BJ (cell line): ENCODE measurements at regions of chr3 and their contacts with region 1.

Region 1: GRCh38 chr3:48439820-48440589 is at the starts of genes CCDC51 and TMA7:
- DNase-seq: peak; percentile 77
- H3K4me3 ChIP-seq: peak within 1 kb of the TSS; percentile 68
- H3K27me3 ChIP-seq: no peaks in the 10 kb centered on the region
- CTCF ChIP-seq: no peak
- polyA plus RNA-seq, gene CCDC51: 11.6 and 14.3 TPM in 2 replicates
- polyA plus RNA-seq, gene TMA7: 53.8 and 162 TPM in 2 replicates

Region 2: DNA sequence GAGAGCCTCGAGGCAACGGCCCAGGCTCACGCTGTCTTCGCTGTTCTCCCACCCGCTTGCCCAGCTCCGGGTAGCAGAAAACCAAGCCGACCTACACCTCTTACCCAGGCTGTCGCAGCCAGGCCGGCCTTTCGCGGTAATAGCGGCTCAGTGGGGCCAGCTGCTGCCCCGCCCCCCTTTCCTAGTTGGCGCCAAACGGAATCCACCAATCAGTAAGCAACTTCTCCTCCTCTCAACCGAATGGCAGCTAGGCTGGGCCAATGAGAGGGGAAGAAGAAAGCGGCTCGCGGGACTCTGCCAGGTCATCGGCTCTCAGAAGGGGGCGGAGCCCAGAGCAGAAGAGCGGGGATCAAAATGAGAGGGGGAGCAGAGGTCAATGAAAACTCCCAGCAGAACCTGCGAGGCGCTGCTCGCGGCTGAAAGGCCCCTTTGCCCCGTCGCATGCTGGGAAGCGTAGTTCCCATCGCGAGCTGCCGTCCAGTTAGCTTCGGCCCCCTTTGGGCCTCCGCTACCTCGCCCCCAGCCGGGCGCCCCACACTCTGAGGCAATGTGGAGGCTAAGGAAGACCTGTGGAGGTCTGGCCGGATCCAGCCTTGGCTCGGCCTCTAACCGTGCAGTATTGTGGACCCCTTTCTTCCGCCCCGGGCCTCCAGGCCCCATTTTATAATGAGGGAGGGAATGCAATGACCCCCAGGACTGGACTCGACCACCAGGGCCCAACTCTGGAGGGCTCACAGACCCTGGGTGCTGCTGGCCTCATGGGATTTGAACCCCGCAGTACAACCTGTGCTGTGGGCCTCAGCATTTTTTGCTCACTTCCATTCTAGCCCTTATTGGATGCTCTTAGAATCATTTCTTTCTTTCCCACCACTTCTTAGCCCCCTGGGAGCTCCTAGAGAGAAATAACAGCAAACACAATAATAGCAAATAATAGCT is 251.5 kb before region 1 on chr3 and contains the start of gene CDC25A:
- CTCF ChIA-PET with region 1: interaction called, 29 read pairs
- POLR2A ChIA-PET with region 1: no interaction called
- DNase-seq: peak; percentile 95
- H3K4me3 ChIP-seq: peak within 1 kb of the TSS; percentile 58
- H3K27me3 ChIP-seq: no peaks in the 10 kb centered on the region
- CTCF ChIP-seq: no peak
- polyA plus RNA-seq, gene CDC25A: 1.9 and 2.7 TPM in 2 replicates

Region 3: DNA sequence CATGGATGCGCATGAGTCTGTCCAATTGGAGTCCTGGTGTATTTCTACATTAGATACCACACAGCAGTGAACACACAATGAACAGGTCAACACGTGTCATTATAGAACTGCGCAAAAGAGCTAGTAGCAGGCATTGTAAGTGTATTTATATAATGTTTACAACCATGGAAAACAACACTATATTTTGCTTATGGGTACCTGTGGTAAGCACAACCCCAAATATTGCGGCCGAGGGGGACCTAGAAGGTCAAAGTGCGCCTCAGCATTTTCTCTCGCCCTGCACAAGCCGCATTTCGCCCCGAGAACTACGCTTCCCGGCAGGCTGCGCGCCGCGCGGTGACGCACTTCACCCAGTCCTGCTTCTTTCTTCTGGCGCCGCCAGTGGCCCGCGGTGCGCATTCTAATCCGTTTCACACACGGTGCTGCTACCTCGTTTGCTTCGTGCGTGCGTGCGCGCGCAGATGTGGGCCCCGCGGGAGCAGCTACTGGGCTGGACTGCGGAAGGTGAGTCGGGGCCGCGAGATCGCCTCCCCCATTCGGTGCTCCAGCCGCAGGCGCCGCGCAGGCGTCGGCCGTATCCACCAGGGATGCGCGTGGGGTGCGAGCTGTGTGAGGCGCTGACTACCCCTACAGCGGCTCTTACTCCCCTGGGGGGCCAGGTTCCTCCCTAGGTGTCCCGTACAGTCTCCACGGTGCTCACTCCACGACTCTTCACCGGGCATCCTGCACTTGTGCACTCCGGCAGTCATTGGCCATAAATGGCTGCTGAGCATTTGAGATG is 199.1 kb before region 1 on chr3 and contains the start of gene ZNF589:
- CTCF ChIA-PET with region 1: interaction called, 37 read pairs
- POLR2A ChIA-PET with region 1: no interaction called
- DNase-seq: peak; percentile 49
- H3K4me3 ChIP-seq: peak within 1 kb of the TSS; percentile 62
- H3K27me3 ChIP-seq: no peaks in the 10 kb centered on the region
- CTCF ChIP-seq: peak; percentile 40
- polyA plus RNA-seq, gene ZNF589: 2.5 and 3.3 TPM in 2 replicates

Region 4: DNA sequence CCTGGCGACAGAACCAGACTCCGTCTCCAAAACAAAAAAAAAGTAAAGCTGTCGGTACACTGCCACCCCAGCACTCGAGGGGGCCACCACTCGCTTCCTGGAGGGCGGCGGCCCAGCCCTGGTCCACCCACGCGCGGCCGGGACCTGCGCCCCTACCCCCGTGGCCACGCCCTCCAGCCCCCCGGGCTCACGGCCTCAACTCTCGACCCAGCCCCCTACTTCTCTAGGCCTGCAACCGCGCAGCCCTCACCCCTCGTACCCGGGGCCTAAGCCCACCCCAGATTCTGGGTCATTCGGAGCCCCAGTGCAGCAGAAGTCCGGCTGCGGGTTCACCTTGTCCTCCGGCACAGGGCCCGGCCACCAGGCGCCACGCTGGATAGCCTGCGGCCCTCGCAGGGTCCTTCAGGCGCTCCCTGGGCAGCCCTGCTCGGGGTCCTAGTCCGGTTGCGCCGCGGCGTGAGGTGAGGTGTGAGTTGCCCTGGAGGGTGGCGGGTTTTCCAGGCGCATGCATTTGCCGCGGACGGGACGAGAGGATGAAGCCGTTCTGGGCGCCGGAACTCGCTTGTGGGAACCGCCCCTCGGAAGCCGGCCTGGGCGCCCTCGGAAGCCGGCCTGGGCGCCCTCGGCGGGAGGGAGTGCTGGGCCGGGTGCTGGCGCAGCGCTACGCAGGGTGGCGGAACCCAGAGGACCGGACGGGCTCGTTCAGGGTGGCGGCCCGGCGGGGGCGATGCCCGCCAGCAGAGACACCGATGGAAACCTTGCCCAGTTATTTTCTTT is 138.8 kb before region 1 on chr3:
- CTCF ChIA-PET with region 1: interaction called, 14 read pairs
- POLR2A ChIA-PET with region 1: no interaction called
- DNase-seq: peak; percentile 37
- H3K4me3 ChIP-seq: peak within 1 kb of the TSS; percentile 93
- H3K27me3 ChIP-seq: no peaks in the 10 kb centered on the region; the same call in 1 of the 2 replicates
- CTCF ChIP-seq: no peak

Region 5: DNA sequence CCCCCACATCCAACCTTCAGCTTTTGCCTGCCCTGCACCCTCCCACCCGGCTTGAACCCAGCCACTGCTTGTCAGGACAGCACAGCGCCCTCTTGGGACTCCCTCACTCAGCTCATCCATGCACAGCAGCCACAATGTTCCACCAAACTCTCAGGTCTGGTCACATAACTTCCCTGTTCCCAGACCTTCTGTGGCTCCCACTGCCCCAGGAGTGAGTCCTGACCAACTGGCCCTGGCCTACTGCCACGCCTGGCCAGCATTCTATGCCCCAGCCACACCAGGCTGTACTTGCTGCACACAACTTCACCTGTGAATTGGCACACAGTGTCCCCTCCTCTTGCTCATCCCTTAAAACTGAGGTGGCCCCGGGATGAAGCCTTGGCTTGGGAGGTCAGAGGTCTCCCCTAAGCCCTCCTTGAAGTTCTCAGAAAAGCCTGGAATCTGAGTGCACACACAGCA is 31.2 kb before region 1 on chr3:
- CTCF ChIA-PET with region 1: interaction called, 252 read pairs
- POLR2A ChIA-PET with region 1: no interaction called
- DNase-seq: no peak
- H3K4me3 ChIP-seq: no peak overlapping the region
- H3K27me3 ChIP-seq: no peaks in the 10 kb centered on the region
- CTCF ChIP-seq: no peak

Region 6: GRCh38 chr3:48548729-48549705 is 109.0 kb after region 1 on chr3:
- CTCF ChIA-PET with region 1: interaction called, 13 read pairs
- POLR2A ChIA-PET with region 1: no interaction called
- DNase-seq: no peak
- H3K4me3 ChIP-seq: no peak overlapping the region
- H3K27me3 ChIP-seq: no peaks in the 10 kb centered on the region
- CTCF ChIP-seq: peak; percentile 96